ENCODE measurements at regions of chr19 and their contacts with region 1.

Region 1: DNA sequence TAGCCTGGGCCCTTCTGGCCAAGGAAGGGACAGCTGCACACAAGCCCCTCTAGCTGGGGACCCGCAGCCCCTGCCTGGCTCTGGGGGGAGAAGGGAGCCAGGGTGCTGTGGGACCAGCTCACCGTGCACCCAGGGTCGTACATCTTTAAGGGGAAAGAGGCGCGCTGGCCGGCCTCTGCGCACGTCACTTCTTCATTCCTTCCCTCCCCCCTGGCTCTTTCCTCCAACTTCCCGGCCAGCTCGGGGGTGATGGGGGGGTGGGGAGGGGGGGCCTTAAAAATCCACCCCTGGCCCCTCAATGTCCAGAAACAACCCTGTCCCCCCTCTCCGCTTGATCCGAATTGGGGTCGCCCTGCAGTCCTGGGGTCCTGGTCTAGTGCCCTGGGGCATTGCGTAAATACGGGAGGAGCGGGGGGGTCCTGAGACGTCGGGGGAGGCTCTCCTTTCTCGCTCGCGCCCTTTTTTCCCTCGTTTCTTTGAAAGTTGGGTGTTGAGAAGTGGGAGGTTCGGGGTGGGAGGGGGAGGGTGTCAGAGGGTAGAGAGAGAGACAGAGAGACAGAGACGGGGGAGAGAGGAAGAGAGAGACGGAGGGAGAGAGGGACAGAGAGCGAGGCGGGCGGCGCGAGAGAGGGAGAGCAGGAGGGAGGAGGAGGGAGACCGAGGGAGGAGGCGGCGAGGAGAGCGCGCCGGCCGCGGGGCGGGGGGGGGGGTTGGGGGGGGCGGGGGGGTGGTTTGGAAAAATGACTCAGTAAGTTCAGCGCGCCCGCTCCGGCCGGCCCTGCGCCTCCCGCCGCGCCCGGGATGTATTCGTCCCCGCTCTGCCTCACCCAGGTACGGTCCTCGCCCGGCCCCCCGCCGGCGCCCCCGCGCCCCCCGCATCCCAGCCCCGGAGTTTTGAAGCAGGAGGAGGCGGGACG is at the start of gene NFIC:
- DNase-seq: peak; percentile 90
- H3K4me3 Mint-ChIP-seq: peak within 1 kb of the TSS; percentile 81
- H3K27ac Mint-ChIP-seq: no peak within 1 kb of the TSS
- H3K4me1 Mint-ChIP-seq: peaks cover 62% of the 10 kb centered on the region
- H3K27me3 Mint-ChIP-seq: no peaks in the 10 kb centered on the region
- CTCF ChIP-seq: no peak
- total RNA-seq, gene NFIC: 83.4 and 85.5 TPM in 2 replicates

Region 2: GRCh38 chr19:3336680-3337523 is 29.2 kb before region 1 on chr19:
- CTCF ChIA-PET with region 1: interaction called, 3 read pairs
- POLR2A ChIA-PET with region 1: interaction called, 10 read pairs
- intact Hi-C with region 1: no loop called
- DNase-seq: peak; percentile 98
- H3K4me3 Mint-ChIP-seq: peak overlapping the region; percentile 55
- H3K27ac Mint-ChIP-seq: peak overlapping the region; percentile 99
- H3K4me1 Mint-ChIP-seq: peaks cover 48% of the 10 kb centered on the region
- H3K27me3 Mint-ChIP-seq: peaks cover 13% of the 10 kb centered on the region
- CTCF ChIP-seq: no peak

Region 3: GRCh38 chr19:3409346-3410064 is 43.4 kb after region 1 on chr19:
- CTCF ChIA-PET with region 1: no interaction called
- POLR2A ChIA-PET with region 1: no interaction called
- intact Hi-C with region 1: no loop called
- DNase-seq: no peak
- H3K4me3 Mint-ChIP-seq: no peak overlapping the region
- H3K27ac Mint-ChIP-seq: no peak overlapping the region
- H3K4me1 Mint-ChIP-seq: peaks cover 9% of the 10 kb centered on the region
- H3K27me3 Mint-ChIP-seq: no peaks in the 10 kb centered on the region
- CTCF ChIP-seq: no peak

Measured in MCF 10A (cell line).